ENCODE measurements at regions of chr5 and their contacts with region 1.

Region 1: DNA sequence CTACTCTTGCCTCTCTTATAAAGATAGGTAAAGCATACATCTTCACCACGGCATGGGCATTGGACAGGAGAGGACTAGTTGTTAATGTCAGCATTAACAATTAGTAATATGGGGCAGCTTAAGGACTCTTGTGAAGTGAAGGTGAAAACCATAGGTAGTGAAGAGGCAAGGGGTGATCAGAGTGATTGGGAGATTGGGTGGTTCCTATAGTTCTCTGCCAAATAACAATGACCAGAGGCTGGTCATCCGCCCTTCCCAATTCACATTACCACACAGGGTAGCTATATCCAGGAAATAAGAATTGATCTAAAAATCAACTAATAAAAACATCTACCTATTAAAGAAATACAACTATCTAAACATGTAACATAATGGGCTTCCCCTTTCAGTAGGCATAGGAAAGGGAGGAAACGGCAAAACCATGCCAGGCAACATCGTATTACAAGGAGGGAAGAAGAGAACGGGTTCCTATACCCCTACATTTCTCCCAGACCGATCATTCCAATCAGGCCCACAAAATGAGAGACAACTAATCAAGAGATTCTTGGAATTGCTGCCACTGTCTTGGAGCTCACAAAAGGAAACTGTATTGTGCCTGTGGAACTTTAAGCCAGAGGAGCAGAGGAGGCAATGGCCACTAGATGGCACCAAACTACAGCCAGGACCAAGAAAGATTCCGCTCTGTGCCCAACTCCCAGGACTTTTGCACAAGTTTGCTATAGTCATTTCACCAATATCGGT is 121.6 kb downstream of the FBXL17 start:
- DNase-seq: peak; percentile 84
- H3K4me3 ChIP-seq: peak overlapping the region; percentile 65
- H3K27ac ChIP-seq: no peak overlapping the region
- H3K4me1 ChIP-seq: peaks cover 28% of the 10 kb centered on the region
- H3K27me3 ChIP-seq: no peaks in the 10 kb centered on the region

Region 2: DNA sequence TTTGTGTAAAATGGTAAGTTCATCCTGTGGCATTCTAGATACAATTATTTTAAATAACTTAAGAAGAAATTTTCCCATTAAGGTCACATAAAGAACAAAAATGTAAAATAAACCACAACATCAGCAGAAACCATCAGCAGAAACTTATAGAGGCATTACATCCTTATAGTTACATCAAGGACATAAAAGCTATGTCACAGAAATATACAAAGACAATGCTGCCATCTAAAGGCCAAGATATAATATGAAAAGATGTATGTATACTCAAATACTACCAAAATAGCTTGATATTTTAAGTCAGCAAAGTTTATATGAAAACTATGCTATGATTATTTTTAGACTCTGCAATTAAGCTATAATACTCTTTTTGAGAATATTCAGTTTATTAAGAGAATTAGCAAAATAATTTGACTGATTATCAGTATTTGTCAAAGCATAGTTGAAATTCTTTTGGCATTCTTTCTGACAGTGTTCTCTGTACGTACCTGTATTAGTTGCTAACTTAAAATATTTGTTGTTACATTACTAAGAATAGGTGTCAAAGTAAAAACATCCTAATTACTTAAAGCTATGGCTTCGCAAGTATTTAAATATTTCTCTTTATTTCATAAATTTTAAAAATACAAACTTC is 85.4 kb after region 1 on chr5:
- in situ Hi-C with region 1: loop called (anchors 10 kb)
- DNase-seq: peak; percentile 63
- H3K4me3 ChIP-seq: no peak overlapping the region
- H3K27ac ChIP-seq: no peak overlapping the region
- H3K4me1 ChIP-seq: no peaks in the 10 kb centered on the region
- H3K27me3 ChIP-seq: no peaks in the 10 kb centered on the region